ENCODE measurements at regions of chr17 and their contacts with region 1.

Region 1: GRCh38 chr17:6487251-6488007 is 43.2 kb downstream of the PIMREG start:
- DNase-seq: peak; percentile 58
- ATAC-seq: no peak

Region 2: GRCh38 chr17:6599364-6599763 is 111.9 kb after region 1 on chr17:
- intact Hi-C with region 1: loop called (anchors 10 kb)
- DNase-seq: no peak
- ATAC-seq: peak; percentile 53